Mammary epithelial cell (primary cell): ENCODE measurements at regions of chr9 and their contacts with region 1.

Region 1: DNA sequence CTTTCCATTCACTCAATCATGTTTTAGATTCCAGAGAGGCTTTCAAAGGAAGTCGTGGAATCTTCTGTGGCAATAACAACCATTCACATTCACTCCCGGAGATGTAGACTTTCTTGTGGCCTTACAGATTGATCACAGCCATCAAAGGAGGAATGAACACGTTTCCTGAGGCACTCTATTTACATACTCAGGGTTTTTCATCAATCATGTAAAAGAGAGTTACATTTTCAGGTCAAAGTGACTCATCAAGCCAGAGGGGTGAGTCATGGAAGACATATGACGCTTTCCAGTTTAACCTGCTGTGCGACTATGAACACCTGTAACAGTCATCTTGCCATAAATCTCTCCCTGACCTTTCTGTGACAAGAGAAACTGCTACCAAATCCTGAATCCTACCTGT is 39.3 kb upstream of the RAD23B start:
- DNase-seq: peak; percentile 98
- H3K4me3 ChIP-seq: no peak overlapping the region
- H3K27ac ChIP-seq: peak overlapping the region; percentile 45
- H3K4me1 ChIP-seq: peaks cover 40% of the 10 kb centered on the region
- H3K27me3 ChIP-seq: no peaks in the 10 kb centered on the region
- CTCF ChIP-seq: no peak

Region 2: GRCh38 chr9:106648799-106649198 is 595.0 kb before region 1 on chr9:
- CTCF ChIA-PET with region 1: no interaction called
- dilution Hi-C with region 1: no loop called
- in situ Hi-C with region 1: no loop called
- intact Hi-C with region 1: no loop called
- DNase-seq: peak; percentile 15
- H3K4me3 ChIP-seq: no peak overlapping the region
- H3K27ac ChIP-seq: no peak overlapping the region
- H3K4me1 ChIP-seq: no peaks in the 10 kb centered on the region
- H3K27me3 ChIP-seq: no peaks in the 10 kb centered on the region
- CTCF ChIP-seq: peak; percentile 40 to 58

Region 3: GRCh38 chr9:107282753-107283625 is 39.2 kb after region 1 on chr9 and contains the start of gene RAD23B:
- CTCF ChIA-PET with region 1: interaction called, 7 read pairs
- dilution Hi-C with region 1: no loop called
- in situ Hi-C with region 1: no loop called
- intact Hi-C with region 1: loop called (anchors 1 kb)
- DNase-seq: peak; percentile 99
- H3K4me3 ChIP-seq: peak within 1 kb of the TSS; percentile 91 to 93 (median 92)
- H3K27ac ChIP-seq: peak within 1 kb of the TSS; percentile 83
- H3K4me1 ChIP-seq: peaks cover 28% of the 10 kb centered on the region
- H3K27me3 ChIP-seq: no peaks in the 10 kb centered on the region
- CTCF ChIP-seq: no peak
- total RNA-seq, gene RAD23B: 126 to 177 TPM

Region 4: GRCh38 chr9:107299437-107299836 is 55.7 kb after region 1 on chr9:
- CTCF ChIA-PET with region 1: interaction called, 4 read pairs
- dilution Hi-C with region 1: no loop called
- in situ Hi-C with region 1: loop called in 1 of 2 experiments (anchors 10 kb)
- intact Hi-C with region 1: loop called (anchors 1 kb)
- DNase-seq: no peak
- H3K4me3 ChIP-seq: no peak overlapping the region
- H3K27ac ChIP-seq: no peak overlapping the region
- H3K4me1 ChIP-seq: peaks cover 6% of the 10 kb centered on the region
- H3K27me3 ChIP-seq: no peaks in the 10 kb centered on the region
- CTCF ChIP-seq: peak; percentile 21 to 29

Region 5: GRCh38 chr9:107309271-107309670 is 65.5 kb after region 1 on chr9:
- CTCF ChIA-PET with region 1: no interaction called
- dilution Hi-C with region 1: no loop called
- in situ Hi-C with region 1: loop called in 1 of 2 experiments (anchors 10 kb)
- intact Hi-C with region 1: no loop called
- DNase-seq: no peak
- H3K4me3 ChIP-seq: no peak overlapping the region
- H3K27ac ChIP-seq: no peak overlapping the region
- H3K4me1 ChIP-seq: no peaks in the 10 kb centered on the region
- H3K27me3 ChIP-seq: no peaks in the 10 kb centered on the region
- CTCF ChIP-seq: no peak

Region 6: DNA sequence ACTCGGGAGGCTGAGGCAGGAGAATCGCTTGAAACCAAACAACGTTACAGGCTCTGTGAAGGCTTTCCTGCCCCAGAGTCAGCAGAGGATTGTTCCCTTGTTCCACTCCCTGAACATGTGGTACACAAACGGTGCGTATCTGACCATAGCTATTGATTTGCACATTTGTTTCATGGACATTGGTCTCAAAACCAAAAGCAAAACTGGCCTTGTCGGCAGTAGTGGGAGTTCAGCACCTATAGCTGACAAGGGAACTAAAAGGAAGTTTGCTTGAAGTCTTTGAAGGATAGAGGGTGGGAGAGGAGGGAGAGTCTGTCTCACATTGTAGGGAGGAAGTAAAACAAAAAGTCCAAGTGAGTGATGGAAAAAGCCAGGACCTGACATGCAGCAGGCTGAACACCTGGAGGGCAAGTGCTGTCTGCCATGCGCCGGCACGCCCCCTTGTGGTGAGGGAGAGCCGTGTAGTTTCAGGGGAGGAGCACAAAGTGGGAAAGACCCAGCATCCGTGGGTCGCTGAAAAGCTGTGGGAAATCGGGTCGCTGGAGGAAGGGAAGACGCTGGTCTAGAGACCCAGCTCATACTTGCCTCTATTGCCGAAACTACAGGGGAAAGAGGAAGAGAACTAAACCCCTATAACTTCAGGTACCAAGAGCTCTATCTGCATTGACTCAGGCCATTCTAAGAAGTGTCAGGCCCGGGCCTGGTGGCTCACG is 97.3 kb after region 1 on chr9:
- CTCF ChIA-PET with region 1: interaction called, 5 read pairs
- dilution Hi-C with region 1: no loop called
- in situ Hi-C with region 1: no loop called
- intact Hi-C with region 1: loop called (anchors 1 kb)
- DNase-seq: peak; percentile 75
- H3K4me3 ChIP-seq: no peak overlapping the region
- H3K27ac ChIP-seq: no peak overlapping the region
- H3K4me1 ChIP-seq: peaks cover 25% of the 10 kb centered on the region
- H3K27me3 ChIP-seq: no peaks in the 10 kb centered on the region
- CTCF ChIP-seq: peak; percentile 96